H1 (cell line): ENCODE measurements at regions of chr4 and their contacts with region 1.

Region 1: GRCh38 chr4:98092833-98093439 is 50.3 kb downstream of the STPG2 start:
- DNase-seq: no peak
- H3K4me3 ChIP-seq: no peak overlapping the region
- H3K27ac ChIP-seq: no peak overlapping the region
- H3K4me1 ChIP-seq: no peaks in the 10 kb centered on the region
- H3K27me3 ChIP-seq: no peaks in the 10 kb centered on the region
- CTCF ChIP-seq: peak in 2 of 3 experiments; percentile 34 to 44; a peak in 2 of 4 replicates
- EP300 ChIP-seq: no peak
- POLR2A ChIP-seq: no peak
- RAD21 ChIP-seq: peak in 1 of 2 experiments; percentile 48; a peak in 3 of 4 replicates

Region 2: GRCh38 chr4:98110214-98110613 is 17.3 kb after region 1 on chr4:
- CTCF ChIA-PET with region 1: interaction called, 11 read pairs
- POLR2A ChIA-PET with region 1: no interaction called
- DNase-seq: no peak
- H3K4me3 ChIP-seq: peak overlapping the region in 1 of 4 experiments; percentile 10; a peak in 1 of 8 replicates
- H3K27ac ChIP-seq: peak overlapping the region; percentile 47; the same call in 1 of the 2 replicates
- H3K4me1 ChIP-seq: peaks cover 0 to 3% (median 1%) of the 10 kb centered on the region in 4 experiments; a peak in 2 of 7 replicates
- H3K27me3 ChIP-seq: no peaks in the 10 kb centered on the region
- CTCF ChIP-seq: no peak
- EP300 ChIP-seq: no peak
- POLR2A ChIP-seq: no peak
- RAD21 ChIP-seq: no peak

Region 3: DNA sequence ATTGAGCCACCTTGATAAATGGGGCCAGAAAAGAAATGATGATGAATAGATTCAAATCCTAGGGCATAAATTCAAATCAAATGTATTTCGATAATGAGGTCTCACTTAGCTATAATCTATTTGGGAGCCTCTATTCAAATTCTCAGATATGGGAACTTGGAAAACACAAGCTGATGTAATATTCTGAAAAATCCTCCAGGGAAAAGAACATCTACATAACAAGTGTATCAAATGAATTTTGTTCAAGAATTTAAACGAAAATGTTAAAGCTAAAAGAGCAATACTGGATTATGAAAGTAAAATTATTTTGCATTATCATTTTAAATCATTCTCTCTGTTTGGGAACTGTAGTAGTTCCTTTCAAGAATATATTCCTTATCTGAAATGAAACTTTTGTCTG is 129.4 kb after region 1 on chr4:
- CTCF ChIA-PET with region 1: no interaction called
- POLR2A ChIA-PET with region 1: no interaction called
- DNase-seq: no peak
- H3K4me3 ChIP-seq: no peak overlapping the region
- H3K27ac ChIP-seq: no peak overlapping the region
- H3K4me1 ChIP-seq: no peaks in the 10 kb centered on the region
- H3K27me3 ChIP-seq: no peaks in the 10 kb centered on the region
- CTCF ChIP-seq: no peak
- EP300 ChIP-seq: no peak
- POLR2A ChIP-seq: no peak
- RAD21 ChIP-seq: no peak